ENCODE measurements at regions of chr13 and their contacts with region 1.

Region 1: GRCh38 chr13:46052319-46053161 is at the start of gene ZC3H13:
- DNase-seq: peak; percentile 96
- ATAC-seq: peak; percentile 100
- H3K4me3 ChIP-seq: peak within 1 kb of the TSS; percentile 80
- H3K27ac ChIP-seq: peak within 1 kb of the TSS; percentile 86
- H3K4me1 ChIP-seq: no peaks in the 10 kb centered on the region
- H3K27me3 ChIP-seq: no peaks in the 10 kb centered on the region
- CTCF ChIP-seq: peak; percentile 32
- POLR2A ChIP-seq: peak; percentile 83
- RAD21 ChIP-seq: no peak
- total RNA-seq, gene ZC3H13: 10.8 and 16.1 TPM in 2 replicates

Region 2: GRCh38 chr13:45773236-45773635 is 279.3 kb before region 1 on chr13:
- CTCF ChIA-PET with region 1: no interaction called
- POLR2A ChIA-PET with region 1: no interaction called
- dilution Hi-C with region 1: no loop called
- in situ Hi-C with region 1: no loop called
- intact Hi-C with region 1: loop called (anchors 10 kb)
- DNase-seq: peak; percentile 79
- ATAC-seq: peak; percentile 93
- H3K4me3 ChIP-seq: no peak overlapping the region
- H3K27ac ChIP-seq: peak overlapping the region; percentile 89; the same call in 1 of the 2 replicates
- H3K4me1 ChIP-seq: peaks cover 9% of the 10 kb centered on the region
- H3K27me3 ChIP-seq: peaks cover 20% of the 10 kb centered on the region
- CTCF ChIP-seq: no peak
- POLR2A ChIP-seq: no peak
- RAD21 ChIP-seq: no peak

Region 3: GRCh38 chr13:46010148-46010547 is 42.4 kb before region 1 on chr13:
- CTCF ChIA-PET with region 1: no interaction called
- POLR2A ChIA-PET with region 1: no interaction called
- dilution Hi-C with region 1: no loop called
- in situ Hi-C with region 1: no loop called
- intact Hi-C with region 1: no loop called
- DNase-seq: no peak
- ATAC-seq: no peak
- H3K4me3 ChIP-seq: no peak overlapping the region
- H3K27ac ChIP-seq: no peak overlapping the region
- H3K4me1 ChIP-seq: no peaks in the 10 kb centered on the region
- H3K27me3 ChIP-seq: no peaks in the 10 kb centered on the region
- CTCF ChIP-seq: peak; percentile 15; the same call in 1 of the 2 replicates
- POLR2A ChIP-seq: no peak
- RAD21 ChIP-seq: no peak

Region 4: GRCh38 chr13:46041419-46041839 is 11.1 kb before region 1 on chr13:
- CTCF ChIA-PET with region 1: interaction called, 5 read pairs
- POLR2A ChIA-PET with region 1: interaction called, 3 read pairs
- dilution Hi-C with region 1: no loop called
- in situ Hi-C with region 1: no loop called
- intact Hi-C with region 1: loop called (anchors 1 kb)
- DNase-seq: peak; percentile 66
- ATAC-seq: peak; percentile 22
- H3K4me3 ChIP-seq: no peak overlapping the region
- H3K27ac ChIP-seq: no peak overlapping the region
- H3K4me1 ChIP-seq: peaks cover 4% of the 10 kb centered on the region
- H3K27me3 ChIP-seq: no peaks in the 10 kb centered on the region
- CTCF ChIP-seq: no peak
- POLR2A ChIP-seq: no peak
- RAD21 ChIP-seq: no peak

Region 5: DNA sequence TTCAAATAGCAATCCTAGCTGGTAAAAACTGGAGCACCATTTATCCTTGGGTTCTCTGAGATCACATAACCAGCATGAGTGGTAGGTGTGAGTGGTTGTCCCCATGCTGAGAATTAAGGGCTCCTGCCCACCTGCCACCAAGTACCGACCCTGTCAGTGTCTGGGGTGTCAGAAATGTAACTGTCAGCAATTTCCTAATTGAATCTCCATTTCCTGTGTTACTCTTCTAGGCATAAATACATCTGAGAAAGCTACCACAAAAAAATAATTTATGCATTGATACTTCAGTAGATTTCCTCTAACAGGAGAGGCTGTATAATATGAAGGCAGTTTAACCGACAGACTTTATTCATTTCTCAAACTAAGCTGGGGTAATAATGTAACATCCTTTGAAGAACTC is 27.2 kb after region 1 on chr13:
- CTCF ChIA-PET with region 1: no interaction called
- POLR2A ChIA-PET with region 1: interaction called, 14 read pairs
- dilution Hi-C with region 1: no loop called
- in situ Hi-C with region 1: no loop called
- intact Hi-C with region 1: no loop called
- DNase-seq: no peak
- ATAC-seq: no peak
- H3K4me3 ChIP-seq: no peak overlapping the region
- H3K27ac ChIP-seq: no peak overlapping the region
- H3K4me1 ChIP-seq: no peaks in the 10 kb centered on the region
- H3K27me3 ChIP-seq: no peaks in the 10 kb centered on the region
- CTCF ChIP-seq: no peak
- POLR2A ChIP-seq: no peak
- RAD21 ChIP-seq: no peak

Region 6: DNA sequence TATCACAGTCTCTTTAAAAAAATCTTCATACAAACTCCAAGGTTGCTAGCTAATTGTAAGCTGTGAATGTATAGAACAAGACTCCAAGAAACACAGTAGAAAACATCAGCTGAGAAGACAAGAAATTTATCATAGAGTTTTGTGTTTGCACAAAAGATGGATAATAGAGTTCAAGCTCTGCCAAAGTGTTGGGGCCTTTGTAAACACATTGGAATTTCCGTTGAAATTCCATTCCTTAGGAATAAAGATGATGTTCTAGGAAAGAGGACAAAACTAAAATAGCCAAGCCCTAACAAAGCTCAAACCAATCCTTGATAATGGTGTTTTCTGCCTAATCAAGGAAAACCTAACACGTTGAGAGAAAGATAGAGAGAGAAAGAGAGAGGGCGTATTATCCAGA is 179.7 kb after region 1 on chr13:
- CTCF ChIA-PET with region 1: no interaction called
- POLR2A ChIA-PET with region 1: no interaction called
- dilution Hi-C with region 1: no loop called
- in situ Hi-C with region 1: no loop called
- intact Hi-C with region 1: no loop called
- DNase-seq: peak; percentile 1
- ATAC-seq: no peak
- H3K4me3 ChIP-seq: no peak overlapping the region
- H3K27ac ChIP-seq: no peak overlapping the region
- H3K4me1 ChIP-seq: no peaks in the 10 kb centered on the region
- H3K27me3 ChIP-seq: no peaks in the 10 kb centered on the region
- CTCF ChIP-seq: no peak
- POLR2A ChIP-seq: no peak
- RAD21 ChIP-seq: no peak

Measured in IMR-90 (cell line).